ENCODE measurements at regions of chr7 and their contacts with region 1.

Region 1: DNA sequence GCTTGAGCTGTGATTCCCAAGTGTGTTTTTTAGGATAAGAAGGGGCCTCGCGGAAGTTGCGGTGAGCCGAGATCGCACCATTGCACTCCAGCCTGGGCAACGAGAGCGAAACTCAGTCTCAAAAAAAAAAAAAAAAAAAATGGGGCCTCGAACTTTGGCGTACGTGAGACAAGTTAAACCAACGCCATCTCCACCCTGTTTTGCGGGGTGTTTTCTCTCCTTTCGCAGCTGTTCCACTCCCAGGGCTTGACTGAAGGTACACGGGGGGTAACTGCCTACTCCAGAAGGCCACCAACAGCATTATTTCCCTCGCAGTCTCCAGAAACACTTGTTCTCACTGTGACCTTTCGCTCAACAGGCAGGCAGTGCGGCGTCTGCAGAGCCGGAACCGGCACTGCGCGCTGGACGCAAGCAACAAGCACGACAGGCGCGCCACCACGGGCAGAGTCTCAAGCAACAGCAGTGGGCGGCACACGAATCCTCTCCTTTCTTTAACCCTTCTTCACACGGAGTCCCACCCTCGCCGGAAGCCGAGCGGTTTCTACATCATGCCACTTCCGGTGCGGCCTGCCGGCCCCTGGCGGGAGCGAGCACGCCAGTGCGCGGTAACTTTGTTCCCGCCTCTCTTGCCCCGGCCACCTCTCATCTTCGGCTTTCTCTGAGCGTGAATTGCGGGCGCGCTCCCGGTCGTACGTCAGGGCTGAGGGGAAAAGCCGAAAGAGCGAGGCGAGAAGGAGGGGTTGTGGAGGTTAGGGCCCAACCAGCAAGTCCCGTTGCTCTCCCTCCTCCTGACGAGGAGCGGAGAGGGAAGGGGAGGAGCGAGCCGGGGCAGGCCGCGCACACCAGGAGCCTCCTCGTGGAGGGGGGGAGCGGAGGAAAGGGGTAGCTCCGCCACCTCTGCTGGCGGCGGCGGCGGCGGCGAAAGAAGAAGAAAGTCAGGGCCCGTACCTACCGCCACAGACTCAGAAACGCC is 814 bp upstream of the CDK13 start:
- DNase-seq: peak; percentile 99 to 100
- ATAC-seq: peak; percentile 87 to 93 (median 90)
- H3K4me3 ChIP-seq: peak overlapping the region; percentile 95
- H3K27ac ChIP-seq: peak overlapping the region; percentile 96
- H3K4me1 ChIP-seq: peaks cover 21% of the 10 kb centered on the region
- H3K27me3 ChIP-seq: no peaks in the 10 kb centered on the region
- CTCF ChIP-seq: no peak

Region 2: GRCh38 chr7:40057292-40057691 is 108.0 kb after region 1 on chr7:
- intact Hi-C with region 1: loop called (anchors 2 to 5 kb)
- DNase-seq: no peak
- ATAC-seq: peak in 2 of 4 donors; percentile 48 to 55
- H3K4me3 ChIP-seq: no peak overlapping the region
- H3K27ac ChIP-seq: no peak overlapping the region
- H3K4me1 ChIP-seq: peaks cover 10% of the 10 kb centered on the region
- H3K27me3 ChIP-seq: no peaks in the 10 kb centered on the region
- CTCF ChIP-seq: no peak

Region 3: GRCh38 chr7:40134428-40135316 is 185.4 kb after region 1 on chr7 and contains the starts of genes MPLKIP and SUGCT:
- intact Hi-C with region 1: loop called (anchors 5 kb)
- DNase-seq: peak; percentile 82 to 91
- ATAC-seq: peak; percentile 95 to 97 (median 96)
- H3K4me3 ChIP-seq: peak within 1 kb of the TSS; percentile 99
- H3K27ac ChIP-seq: peak within 1 kb of the TSS; percentile 97
- H3K4me1 ChIP-seq: peaks cover 32% of the 10 kb centered on the region
- H3K27me3 ChIP-seq: no peaks in the 10 kb centered on the region
- CTCF ChIP-seq: peak; percentile 96
- total RNA-seq, gene MPLKIP: 17.3 to 19.0 (median 18.9) TPM
- total RNA-seq, gene SUGCT: 3.2 to 7.3 (median 5.0) TPM

Region 4: DNA sequence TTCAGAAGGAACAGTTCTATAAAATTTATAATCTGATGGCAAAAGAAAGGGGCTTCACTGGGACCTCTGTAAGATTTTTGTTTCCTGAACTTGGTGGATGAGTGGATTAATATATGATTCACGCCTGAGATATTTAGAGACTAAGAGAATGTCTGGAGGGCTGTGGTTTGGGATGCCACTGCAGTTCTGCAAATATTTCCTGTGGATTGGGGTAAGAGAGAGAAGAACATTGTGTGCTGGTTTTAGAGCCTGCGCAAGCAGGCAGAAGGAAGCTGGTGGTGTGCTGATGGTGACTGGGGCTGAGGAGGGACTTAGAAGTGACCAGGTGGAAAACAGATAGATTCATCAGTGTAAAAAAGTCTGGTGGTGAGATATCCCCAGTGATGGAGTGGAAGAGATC is 272.6 kb after region 1 on chr7:
- intact Hi-C with region 1: no loop called
- DNase-seq: no peak
- ATAC-seq: no peak
- H3K4me3 ChIP-seq: no peak overlapping the region
- H3K27ac ChIP-seq: no peak overlapping the region
- H3K4me1 ChIP-seq: no peaks in the 10 kb centered on the region
- H3K27me3 ChIP-seq: no peaks in the 10 kb centered on the region
- CTCF ChIP-seq: no peak